ENCODE measurements at regions of chr9 and their contacts with region 1.

Region 1: GRCh38 chr9:72753266-72753893 is 199.5 kb downstream of the ALDH1A1 start:
- DNase-seq: peak in 1 of 2 experiments; percentile 18
- H3K4me3 ChIP-seq: no peak overlapping the region
- H3K27ac ChIP-seq: no peak overlapping the region
- H3K4me1 ChIP-seq: no peaks in the 10 kb centered on the region
- H3K27me3 ChIP-seq: no peaks in the 10 kb centered on the region
- CTCF ChIP-seq: peak; percentile 49

Region 2: DNA sequence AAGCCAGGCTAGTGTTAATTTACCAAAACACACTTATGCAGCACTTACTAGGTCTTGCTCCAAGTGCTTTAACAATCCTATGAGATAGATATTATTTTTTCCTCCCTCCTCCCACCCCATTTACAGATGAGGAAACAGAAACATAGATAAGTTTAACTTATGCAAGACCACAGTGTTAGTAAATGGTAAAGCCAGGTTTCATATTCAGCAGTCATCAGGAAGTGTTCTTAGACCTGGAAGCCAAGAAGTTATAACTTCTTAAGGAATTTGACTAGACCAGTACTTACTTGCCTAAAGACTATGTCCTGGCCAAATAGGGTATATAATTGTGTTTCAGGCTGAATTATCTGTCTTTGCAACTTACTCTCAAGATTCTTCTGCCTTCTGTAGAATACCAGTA is 858.3 kb before region 1 on chr9:
- CTCF ChIA-PET with region 1: no interaction called
- POLR2A ChIA-PET with region 1: interaction called, 14 read pairs
- intact Hi-C with region 1: no loop called
- DNase-seq: no peak
- H3K4me3 ChIP-seq: no peak overlapping the region
- H3K27ac ChIP-seq: 0 out of 2 replicates have a peak overlapping the region, but pooled peaks have one; percentile 21
- H3K4me1 ChIP-seq: no peaks in the 10 kb centered on the region
- H3K27me3 ChIP-seq: no peaks in the 10 kb centered on the region
- CTCF ChIP-seq: no peak

Region 3: GRCh38 chr9:72687331-72687730 is 66.0 kb before region 1 on chr9:
- CTCF ChIA-PET with region 1: no interaction called
- POLR2A ChIA-PET with region 1: no interaction called
- intact Hi-C with region 1: loop called (anchors 5 kb)
- DNase-seq: no peak
- H3K4me3 ChIP-seq: no peak overlapping the region
- H3K27ac ChIP-seq: no peak overlapping the region
- H3K4me1 ChIP-seq: 0 out of 2 replicates have a peak, but pooled peaks cover 10% of the 10 kb centered on the region
- H3K27me3 ChIP-seq: no peaks in the 10 kb centered on the region
- CTCF ChIP-seq: no peak

Region 4: GRCh38 chr9:72907421-72907820 is 154.0 kb after region 1 on chr9:
- CTCF ChIA-PET with region 1: no interaction called
- POLR2A ChIA-PET with region 1: no interaction called
- intact Hi-C with region 1: no loop called
- DNase-seq: no peak
- H3K4me3 ChIP-seq: no peak overlapping the region
- H3K27ac ChIP-seq: no peak overlapping the region
- H3K4me1 ChIP-seq: no peaks in the 10 kb centered on the region
- H3K27me3 ChIP-seq: no peaks in the 10 kb centered on the region
- CTCF ChIP-seq: no peak